MCF 10A (cell line): ENCODE measurements at regions of chr20 and their contacts with region 1.

Region 1: DNA sequence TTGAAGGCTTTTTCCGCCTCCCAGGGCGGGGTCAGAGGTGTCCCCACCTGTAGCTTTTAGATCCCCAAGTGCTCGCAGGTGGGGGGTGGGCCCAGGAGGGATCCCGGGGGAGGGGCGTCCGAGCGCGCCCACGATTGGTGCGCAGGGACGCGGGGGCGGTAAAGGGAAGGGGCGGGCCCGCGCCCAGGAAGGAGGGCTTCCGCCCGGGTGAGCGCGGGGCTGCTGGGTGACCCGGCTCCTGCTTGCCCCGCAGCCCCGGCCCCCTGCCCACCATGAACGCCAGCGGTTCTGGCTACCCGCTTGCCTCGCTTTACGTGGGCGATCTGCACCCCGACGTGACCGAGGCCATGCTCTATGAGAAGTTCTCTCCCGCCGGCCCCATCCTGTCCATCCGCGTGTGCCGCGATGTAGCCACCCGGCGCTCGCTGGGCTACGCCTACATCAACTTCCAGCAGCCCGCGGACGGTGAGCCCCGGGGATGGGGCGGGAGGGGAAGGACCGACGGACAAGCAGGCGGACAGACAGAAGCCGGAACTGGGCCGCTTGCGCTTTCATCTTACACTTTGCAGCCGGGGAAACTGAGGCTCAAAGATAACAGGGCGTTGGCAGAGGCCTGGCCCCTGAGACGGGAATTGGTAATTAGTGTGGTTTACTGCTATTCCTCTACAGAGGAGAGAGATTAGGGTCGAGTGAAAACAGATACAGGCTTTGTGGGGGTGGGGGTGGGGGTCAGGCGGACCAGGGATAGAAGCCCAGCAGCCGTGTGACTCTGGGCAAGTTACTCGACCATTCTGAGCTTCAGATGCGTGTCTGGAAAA is at the start of gene PABPC1L:
- DNase-seq: peak; percentile 77
- H3K4me3 Mint-ChIP-seq: peak within 1 kb of the TSS; percentile 83
- H3K27ac Mint-ChIP-seq: peak within 1 kb of the TSS; percentile 46
- H3K4me1 Mint-ChIP-seq: no peaks in the 10 kb centered on the region
- H3K27me3 Mint-ChIP-seq: no peaks in the 10 kb centered on the region
- CTCF ChIP-seq: no peak
- total RNA-seq, gene PABPC1L: 150 and 182 TPM in 2 replicates

Region 2: DNA sequence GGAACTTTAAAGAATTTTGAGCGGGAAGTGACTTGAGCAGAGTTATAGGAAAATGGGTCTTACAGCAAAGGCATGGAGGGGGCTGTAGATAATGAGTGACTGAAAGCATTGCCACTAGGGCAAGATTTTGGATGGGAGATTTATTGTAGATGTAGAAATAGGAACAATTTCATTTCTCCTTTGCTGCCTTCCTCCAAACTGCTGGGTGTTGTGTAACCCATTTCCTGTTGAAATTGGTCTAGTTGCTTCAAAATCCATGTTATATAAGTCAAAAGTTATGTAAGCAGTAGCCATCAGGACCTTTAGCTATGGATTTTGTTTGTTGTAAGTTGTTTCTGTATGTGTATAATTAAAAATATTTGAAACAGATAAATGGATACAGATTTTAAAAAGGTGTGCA is 13.5 kb before region 1 on chr20:
- CTCF ChIA-PET with region 1: interaction called, 5 read pairs
- POLR2A ChIA-PET with region 1: interaction called, 13 read pairs
- intact Hi-C with region 1: no loop called
- DNase-seq: peak; percentile 38
- H3K4me3 Mint-ChIP-seq: no peak overlapping the region
- H3K27ac Mint-ChIP-seq: no peak overlapping the region
- H3K4me1 Mint-ChIP-seq: peaks cover 47% of the 10 kb centered on the region
- H3K27me3 Mint-ChIP-seq: no peaks in the 10 kb centered on the region
- CTCF ChIP-seq: no peak